ENCODE measurements at regions of chr2 and their contacts with region 1.

Region 1: GRCh38 chr2:140344842-140345241 is 1564.7 kb upstream of the NXPH2 start:
- DNase-seq: no peak
- H3K4me3 ChIP-seq: no peak overlapping the region
- H3K27ac ChIP-seq: no peak overlapping the region
- H3K4me1 ChIP-seq: peaks cover 10% of the 10 kb centered on the region
- H3K27me3 ChIP-seq: no peaks in the 10 kb centered on the region
- CTCF ChIP-seq: no peak

Region 2: DNA sequence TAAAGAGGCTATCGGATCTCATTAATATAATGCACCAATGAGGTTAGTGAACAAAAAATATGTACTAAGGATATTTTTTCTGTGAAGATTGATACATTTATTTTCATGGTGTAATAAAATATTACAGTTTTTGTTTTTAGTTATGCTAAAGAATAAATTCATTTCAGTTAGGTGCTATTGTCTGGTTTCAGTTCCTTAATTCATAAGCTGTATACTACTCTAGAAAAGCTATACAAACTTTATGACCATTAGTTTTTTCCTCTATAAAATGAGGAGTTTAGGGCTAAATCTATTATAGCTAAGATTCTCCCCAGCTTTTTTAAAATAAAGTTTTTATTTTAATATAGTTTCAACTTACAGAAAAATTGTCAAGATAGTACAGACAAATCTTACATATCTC is 252.9 kb before region 1 on chr2:
- CTCF ChIA-PET with region 1: no interaction called
- POLR2A ChIA-PET with region 1: no interaction called
- intact Hi-C with region 1: loop called (anchors 10 kb)
- DNase-seq: no peak
- H3K4me3 ChIP-seq: no peak overlapping the region
- H3K27ac ChIP-seq: no peak overlapping the region
- H3K4me1 ChIP-seq: peaks cover 22% of the 10 kb centered on the region
- H3K27me3 ChIP-seq: no peaks in the 10 kb centered on the region
- CTCF ChIP-seq: no peak